Heart left ventricle (tissue), 16 donors: ENCODE measurements at regions of chrX and their contacts with region 1.

Region 1: GRCh38 chrX:49199906-49200771 is at the start of gene SYP:
- DNase-seq: peak; percentile 88 to 93 (median 90)
- ATAC-seq: peak; percentile 91 to 97 (median 96)
- H3K4me3 ChIP-seq: peak within 1 kb of the TSS in 11 of 12 donors; percentile 3 to 54 (median 46)
- H3K27ac ChIP-seq: peak within 1 kb of the TSS in 10 of 12 donors; percentile 52 to 76 (median 70)
- H3K4me1 ChIP-seq: peaks cover 0 to 11% (median 2%) of the 10 kb centered on the region in 12 donors
- H3K27me3 ChIP-seq: no peaks in the 10 kb centered on the region
- CTCF ChIP-seq: peak in 1 of 12 donors; percentile 8
- POLR2A ChIP-seq: peak in 1 of 2 donors; percentile 78
- total RNA-seq, gene SYP: 0.49 to 2.7 (median 1.1) TPM

Region 2: GRCh38 chrX:49269010-49269767 is 69.0 kb after region 1 on chrX:
- intact Hi-C with region 1: loop called in 4 of 10 experiments (anchors 5 to 10 kb)
- DNase-seq: peak; percentile 96 to 98 (median 97)
- ATAC-seq: peak; percentile 94 to 98 (median 96)
- H3K4me3 ChIP-seq: peak overlapping the region; percentile 29 to 93 (median 74)
- H3K27ac ChIP-seq: peak overlapping the region; percentile 85 to 98 (median 90)
- H3K4me1 ChIP-seq: peaks cover 0 to 34% (median 17%) of the 10 kb centered on the region in 12 donors
- H3K27me3 ChIP-seq: no peaks in the 10 kb centered on the region
- CTCF ChIP-seq: no peak
- POLR2A ChIP-seq: peak in 1 of 2 donors; percentile 73